Common myeloid progenitor, CD34-positive (primary cell): ENCODE measurements at regions of chr22 and their contacts with region 1.

Region 1: GRCh38 chr22:19730655-19731360 is 7.5 kb downstream of the GP1BB start:
- DNase-seq: peak; percentile 69 to 83 (median 82)
- H3K4me3 ChIP-seq: peak overlapping the region in 6 of 7 experiments; percentile 17 to 70 (median 54)
- H3K27ac ChIP-seq: no peak overlapping the region
- H3K4me1 ChIP-seq: peaks cover 0 to 11% (median 8%) of the 10 kb centered on the region in 4 experiments
- H3K27me3 ChIP-seq: peaks cover 0 to 2% (median 0%) of the 10 kb centered on the region in 5 experiments

Region 2: DNA sequence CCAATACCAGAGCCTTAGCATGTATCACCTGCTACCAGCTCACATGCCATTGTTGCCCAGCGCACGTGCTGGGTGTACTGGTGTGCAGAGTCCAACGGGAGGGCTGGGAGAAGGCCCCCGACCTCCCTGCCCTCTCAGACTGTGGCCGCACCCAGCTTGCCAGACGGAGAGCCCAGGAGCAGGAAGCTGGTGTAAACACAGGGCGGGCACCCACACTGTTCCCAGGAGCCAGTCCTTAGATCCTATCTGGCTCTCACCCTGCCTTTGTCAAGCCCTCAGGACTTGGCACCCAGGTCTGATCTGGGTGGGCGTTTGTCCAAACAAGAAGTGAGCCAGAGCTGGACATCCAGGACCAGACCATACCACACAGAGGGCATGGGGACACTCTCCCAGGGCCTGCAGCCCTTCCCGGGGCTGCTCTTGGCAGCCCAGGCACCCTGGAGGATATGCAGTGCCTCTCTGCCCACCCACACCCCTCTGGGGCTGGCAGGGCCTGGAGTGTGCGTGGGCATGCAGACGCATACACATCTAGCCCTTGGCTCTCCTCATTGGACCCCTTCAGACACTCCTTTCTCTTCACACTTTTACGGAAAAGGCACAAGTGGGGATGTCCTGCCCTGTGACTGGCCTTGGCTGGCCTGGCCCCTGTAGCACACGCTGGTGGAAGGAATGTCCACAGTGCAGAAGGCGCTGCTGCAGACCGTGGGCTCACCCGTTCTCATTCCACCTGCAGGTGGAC is 186.7 kb before region 1 on chr22:
- CTCF ChIA-PET with region 1: no interaction called
- POLR2A ChIA-PET with region 1: no interaction called
- DNase-seq: no peak
- H3K4me3 ChIP-seq: no peak overlapping the region
- H3K27ac ChIP-seq: no peak overlapping the region
- H3K4me1 ChIP-seq: peaks cover 0 to 5% (median 0%) of the 10 kb centered on the region in 4 experiments
- H3K27me3 ChIP-seq: no peaks in the 10 kb centered on the region

Region 3: GRCh38 chr22:19745155-19746101 is 14.6 kb after region 1 on chr22:
- CTCF ChIA-PET with region 1: interaction called, 30 read pairs
- POLR2A ChIA-PET with region 1: no interaction called
- DNase-seq: no peak
- H3K4me3 ChIP-seq: no peak overlapping the region
- H3K27ac ChIP-seq: no peak overlapping the region
- H3K4me1 ChIP-seq: no peaks in the 10 kb centered on the region
- H3K27me3 ChIP-seq: peaks cover 0 to 3% (median 0%) of the 10 kb centered on the region in 5 experiments

Region 4: GRCh38 chr22:19750507-19751490 is 20.0 kb after region 1 on chr22:
- CTCF ChIA-PET with region 1: interaction called, 21 read pairs
- POLR2A ChIA-PET with region 1: no interaction called
- DNase-seq: no peak
- H3K4me3 ChIP-seq: no peak overlapping the region
- H3K27ac ChIP-seq: no peak overlapping the region
- H3K4me1 ChIP-seq: peaks cover 0 to 12% (median 6%) of the 10 kb centered on the region in 4 experiments
- H3K27me3 ChIP-seq: peaks cover 0 to 43% (median 27%) of the 10 kb centered on the region in 5 experiments

Region 5: GRCh38 chr22:19756288-19757128 is 25.7 kb after region 1 on chr22:
- CTCF ChIA-PET with region 1: interaction called, 16 read pairs
- POLR2A ChIA-PET with region 1: no interaction called
- DNase-seq: peak; percentile 44 to 63 (median 50)
- H3K4me3 ChIP-seq: peak overlapping the region in 5 of 7 experiments; percentile 27 to 66 (median 42)
- H3K27ac ChIP-seq: no peak overlapping the region
- H3K4me1 ChIP-seq: peaks cover 0 to 56% (median 27%) of the 10 kb centered on the region in 4 experiments
- H3K27me3 ChIP-seq: peaks cover 0 to 94% (median 38%) of the 10 kb centered on the region in 5 experiments

Region 6: DNA sequence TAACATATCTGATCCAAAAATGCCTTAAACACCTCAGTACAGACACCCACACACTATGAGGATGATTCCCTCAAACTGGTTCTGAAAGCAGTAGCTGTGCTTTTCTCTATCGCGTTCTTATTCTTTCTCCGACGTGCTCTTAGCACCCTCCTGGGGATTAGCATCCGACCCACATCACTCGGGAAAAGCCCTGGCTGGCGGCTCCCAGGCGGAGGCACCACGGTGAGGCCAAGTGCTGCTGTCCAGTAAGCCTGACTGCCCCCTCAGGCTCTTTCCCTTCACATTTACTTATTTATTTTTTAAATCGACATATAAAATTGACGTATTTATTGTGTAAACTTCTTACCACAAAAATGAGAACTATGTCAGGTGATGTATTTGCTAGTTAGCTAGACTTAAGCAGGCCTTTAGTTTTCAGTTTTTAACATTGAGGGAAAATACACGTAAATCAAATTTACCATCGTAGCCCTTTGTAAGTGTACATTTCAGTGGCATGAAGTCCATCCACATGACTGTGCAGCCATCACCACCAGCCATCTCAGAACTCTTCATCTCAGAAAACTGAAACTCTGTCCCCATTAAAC is 49.0 kb after region 1 on chr22:
- CTCF ChIA-PET with region 1: interaction called, 11 read pairs
- POLR2A ChIA-PET with region 1: no interaction called
- DNase-seq: no peak
- H3K4me3 ChIP-seq: no peak overlapping the region
- H3K27ac ChIP-seq: peak overlapping the region in 1 of 2 experiments; percentile 47
- H3K4me1 ChIP-seq: peaks cover 0 to 15% (median 12%) of the 10 kb centered on the region in 4 experiments
- H3K27me3 ChIP-seq: no peaks in the 10 kb centered on the region

Region 7: GRCh38 chr22:19903031-19903430 is 172.2 kb after region 1 on chr22:
- CTCF ChIA-PET with region 1: interaction called, 15 read pairs
- POLR2A ChIA-PET with region 1: interaction called, 3 read pairs
- DNase-seq: no peak
- H3K4me3 ChIP-seq: no peak overlapping the region
- H3K27ac ChIP-seq: no peak overlapping the region
- H3K4me1 ChIP-seq: no peaks in the 10 kb centered on the region
- H3K27me3 ChIP-seq: no peaks in the 10 kb centered on the region

Region 8: GRCh38 chr22:19909350-19910179 is 178.8 kb after region 1 on chr22:
- CTCF ChIA-PET with region 1: interaction called, 86 read pairs
- POLR2A ChIA-PET with region 1: no interaction called
- DNase-seq: peak; percentile 75 to 86 (median 81)
- H3K4me3 ChIP-seq: no peak overlapping the region
- H3K27ac ChIP-seq: no peak overlapping the region
- H3K4me1 ChIP-seq: peaks cover 0 to 4% (median under 1%) of the 10 kb centered on the region in 4 experiments
- H3K27me3 ChIP-seq: no peaks in the 10 kb centered on the region